B cell (primary cell): ENCODE measurements at regions of chr22 and their contacts with region 1.

Region 1: DNA sequence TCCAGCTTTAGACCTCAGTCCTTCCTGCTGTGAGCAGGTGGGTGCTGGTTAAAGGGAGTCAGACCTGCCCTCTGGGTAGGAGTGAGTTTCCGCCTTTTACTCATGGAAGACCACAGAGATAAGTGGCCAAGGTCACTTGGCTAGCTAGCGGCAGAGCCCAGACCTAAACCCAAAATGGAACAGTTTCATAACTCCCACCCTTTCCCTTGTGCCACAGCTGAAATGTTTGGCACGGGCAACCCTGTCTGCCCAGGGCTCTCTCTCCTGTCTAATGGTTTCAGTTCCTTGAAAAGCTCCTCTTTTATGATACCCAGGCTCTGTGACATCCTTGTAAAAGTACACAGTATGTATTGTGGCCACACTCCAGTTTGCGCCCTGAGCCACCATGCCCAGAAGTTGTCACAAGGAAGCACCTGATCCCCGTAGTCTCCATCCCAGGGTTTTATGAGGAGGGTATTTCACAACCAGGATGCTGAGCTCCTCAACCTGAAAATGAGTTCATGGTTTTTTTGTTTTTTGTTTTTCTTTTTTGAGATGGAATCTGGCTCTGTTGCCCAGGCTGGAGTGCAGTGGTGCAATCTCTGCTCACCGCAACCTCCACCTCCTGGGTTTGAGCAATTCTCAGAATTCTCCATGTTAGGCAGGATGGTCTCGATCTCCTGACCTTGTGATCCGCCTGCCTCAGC is 5.1 kb downstream of the MB start:
- DNase-seq: no peak
- ATAC-seq: no peak
- H3K4me3 ChIP-seq: no peak overlapping the region
- H3K4me3 Mint-ChIP-seq: no peak overlapping the region
- H3K27ac ChIP-seq: no peak overlapping the region
- H3K27ac Mint-ChIP-seq: no peak overlapping the region
- H3K4me1 ChIP-seq: peaks cover 10 to 13% of the 10 kb centered on the region in 2 donors
- H3K4me1 Mint-ChIP-seq: peaks cover 10% of the 10 kb centered on the region
- H3K27me3 ChIP-seq: peaks cover 0 to 17% (median 0%) of the 10 kb centered on the region in 4 experiments
- H3K27me3 Mint-ChIP-seq: peaks cover 16% of the 10 kb centered on the region
- CTCF ChIP-seq: no peak

Region 2: DNA sequence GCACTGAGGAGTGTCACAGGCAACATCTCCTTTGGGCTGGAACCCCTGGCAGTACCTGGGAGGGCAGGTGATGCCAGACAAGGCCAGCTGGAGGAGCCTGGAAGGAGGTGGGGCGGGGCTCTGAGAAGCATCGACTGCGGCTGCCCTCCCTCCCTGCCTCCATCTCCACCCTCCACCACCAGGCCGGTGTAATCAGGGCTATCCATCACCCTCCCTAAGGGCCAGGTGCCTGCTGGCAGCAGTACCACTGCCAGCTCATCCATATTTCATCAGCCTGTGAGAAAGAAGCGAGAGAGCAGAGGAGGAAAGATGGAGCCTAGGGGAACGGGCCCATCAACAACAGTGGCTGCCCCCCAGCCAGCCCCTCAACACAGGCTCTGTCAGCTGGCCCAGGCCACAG is 122.8 kb before region 1 on chr22:
- CTCF ChIA-PET with region 1: no interaction called
- POLR2A ChIA-PET with region 1: no interaction called
- intact Hi-C with region 1: no loop called
- DNase-seq: no peak
- ATAC-seq: no peak
- H3K4me3 ChIP-seq: no peak overlapping the region
- H3K4me3 Mint-ChIP-seq: no peak overlapping the region
- H3K27ac ChIP-seq: no peak overlapping the region
- H3K27ac Mint-ChIP-seq: no peak overlapping the region
- H3K4me1 ChIP-seq: no peaks in the 10 kb centered on the region
- H3K4me1 Mint-ChIP-seq: no peaks in the 10 kb centered on the region
- H3K27me3 ChIP-seq: peaks cover 0 to 22% (median 2%) of the 10 kb centered on the region in 4 experiments
- H3K27me3 Mint-ChIP-seq: peaks cover 52% of the 10 kb centered on the region
- CTCF ChIP-seq: no peak

Region 3: GRCh38 chr22:35622191-35622913 is 10.3 kb after region 1 on chr22:
- CTCF ChIA-PET with region 1: interaction called, 18 read pairs
- POLR2A ChIA-PET with region 1: no interaction called
- intact Hi-C with region 1: no loop called
- DNase-seq: no peak
- ATAC-seq: no peak
- H3K4me3 ChIP-seq: no peak overlapping the region
- H3K4me3 Mint-ChIP-seq: no peak overlapping the region
- H3K27ac ChIP-seq: no peak overlapping the region
- H3K27ac Mint-ChIP-seq: no peak overlapping the region
- H3K4me1 ChIP-seq: peaks cover 5% of the 10 kb centered on the region in 2 donors
- H3K4me1 Mint-ChIP-seq: peaks cover 5% of the 10 kb centered on the region
- H3K27me3 ChIP-seq: peaks cover 0 to 32% (median 22%) of the 10 kb centered on the region in 4 experiments
- H3K27me3 Mint-ChIP-seq: peaks cover 33% of the 10 kb centered on the region
- CTCF ChIP-seq: no peak

Region 4: GRCh38 chr22:36117053-36117554 is 505.1 kb after region 1 on chr22:
- CTCF ChIA-PET with region 1: no interaction called
- POLR2A ChIA-PET with region 1: no interaction called
- intact Hi-C with region 1: no loop called
- DNase-seq: no peak
- ATAC-seq: no peak
- H3K4me3 ChIP-seq: no peak overlapping the region
- H3K4me3 Mint-ChIP-seq: no peak overlapping the region
- H3K27ac ChIP-seq: no peak overlapping the region
- H3K27ac Mint-ChIP-seq: no peak overlapping the region
- H3K4me1 ChIP-seq: no peaks in the 10 kb centered on the region
- H3K4me1 Mint-ChIP-seq: no peaks in the 10 kb centered on the region
- H3K27me3 ChIP-seq: no peaks in the 10 kb centered on the region
- H3K27me3 Mint-ChIP-seq: no peaks in the 10 kb centered on the region
- CTCF ChIP-seq: no peak